Activated T-helper 1 cell treated with anti-CD3 and anti-CD28 coated beads, Interleukin-12 subunit alpha, Interleukin-12 subunit beta, Interleukin-2, Interleukin-4 antibody, amounts not matched to agents 30 ng/mL and 10 ng/mL and 1 ng/mL, durations not matched to agents 14 hours and 24 hours and 36 hours (primary cell): ENCODE measurements at regions of chr2 and their contacts with region 1.

Region 1: DNA sequence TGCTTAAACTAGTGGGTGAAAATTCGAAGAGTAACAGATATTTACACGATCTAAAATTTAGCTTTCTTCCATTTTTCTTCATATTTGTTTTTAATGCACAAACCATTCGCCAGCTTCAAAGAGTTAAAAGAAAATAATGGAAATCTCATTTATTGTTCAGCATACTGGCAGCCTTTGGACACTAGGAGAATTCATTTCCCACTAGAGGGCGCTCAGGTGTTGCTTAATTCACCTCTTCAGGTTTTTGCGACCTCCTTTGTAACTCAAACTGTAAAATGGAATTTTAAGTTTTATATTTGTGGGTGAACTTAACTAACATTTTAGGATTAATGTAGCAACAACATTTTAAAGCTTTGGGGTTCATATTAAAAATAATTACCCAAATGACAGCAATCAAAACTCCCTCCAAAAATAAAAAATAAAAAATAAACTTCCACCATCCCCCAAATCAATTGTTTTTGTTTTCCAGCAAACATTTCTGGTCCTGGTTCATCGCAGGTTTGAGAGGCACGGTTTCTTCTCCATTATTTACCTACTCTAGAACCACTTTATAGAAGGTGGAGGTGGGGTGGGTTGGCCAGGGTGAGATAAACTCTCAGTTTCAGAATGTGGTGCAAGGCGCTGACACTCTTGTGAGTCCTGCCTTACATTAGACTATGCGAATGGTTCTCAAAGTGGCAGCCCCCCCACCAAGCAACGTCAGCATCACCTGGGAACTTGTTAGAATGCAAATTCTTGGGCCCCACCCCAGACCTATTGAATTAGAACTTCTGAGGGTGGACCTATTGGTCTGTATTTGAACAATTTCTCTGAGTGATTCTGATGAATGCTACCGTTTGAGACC is 24.7 kb upstream of the PNPT1 start:
- DNase-seq: peak; percentile 5
- H3K4me3 Mint-ChIP-seq: no peak overlapping the region
- H3K27ac Mint-ChIP-seq: no peak overlapping the region
- H3K4me1 Mint-ChIP-seq: no peaks in the 10 kb centered on the region
- H3K27me3 Mint-ChIP-seq: no peaks in the 10 kb centered on the region

Region 2: GRCh38 chr2:55961318-55961911 is 243.0 kb after region 1 on chr2:
- intact Hi-C with region 1: loop called (anchors 1 kb)
- DNase-seq: no peak
- H3K4me3 Mint-ChIP-seq: no peak overlapping the region
- H3K27ac Mint-ChIP-seq: no peak overlapping the region
- H3K4me1 Mint-ChIP-seq: no peaks in the 10 kb centered on the region
- H3K27me3 Mint-ChIP-seq: peaks cover 4% of the 10 kb centered on the region

Region 3: DNA sequence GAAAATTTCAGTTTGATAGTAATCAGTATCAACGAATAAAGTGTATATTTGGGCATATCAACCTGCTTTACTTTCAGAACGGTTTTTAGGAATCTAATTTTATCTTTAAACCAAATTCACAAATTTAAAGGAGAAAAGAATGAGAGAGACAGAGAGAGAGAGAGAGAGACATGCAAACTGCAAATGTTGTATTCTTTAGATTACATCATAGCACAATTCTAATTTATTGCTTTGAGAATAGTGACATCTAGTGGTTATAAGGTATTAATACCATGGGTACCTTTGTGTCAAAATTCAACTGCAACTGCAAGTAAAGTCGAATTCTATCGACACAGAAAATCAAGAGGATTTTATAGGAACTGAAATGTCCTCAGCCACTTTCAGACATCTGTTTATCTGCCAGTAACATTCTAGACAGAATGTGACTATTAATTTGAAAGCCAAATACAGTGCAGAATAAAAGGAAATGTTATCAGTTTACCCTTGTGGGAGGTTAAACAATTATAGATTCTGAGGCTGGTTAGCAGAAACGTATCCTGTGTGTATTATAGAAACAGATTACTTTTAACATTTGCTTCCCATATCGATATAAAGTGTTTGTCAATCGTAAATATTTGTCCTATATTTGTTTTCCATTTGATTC is 1798.4 kb after region 1 on chr2:
- intact Hi-C with region 1: loop called (anchors 5 kb)
- DNase-seq: no peak
- H3K4me3 Mint-ChIP-seq: no peak overlapping the region
- H3K27ac Mint-ChIP-seq: no peak overlapping the region
- H3K4me1 Mint-ChIP-seq: no peaks in the 10 kb centered on the region
- H3K27me3 Mint-ChIP-seq: no peaks in the 10 kb centered on the region